Common myeloid progenitor, CD34-positive (primary cell): ENCODE measurements at regions of chr2 and their contacts with region 1.

Region 1: GRCh38 chr2:224369028-224369632 is 32.8 kb downstream of the FAM124B start:
- DNase-seq: peak; percentile 57 to 75 (median 67)
- H3K4me3 ChIP-seq: no peak overlapping the region
- H3K27ac ChIP-seq: no peak overlapping the region
- H3K4me1 ChIP-seq: no peaks in the 10 kb centered on the region
- H3K27me3 ChIP-seq: no peaks in the 10 kb centered on the region

Region 2: GRCh38 chr2:224293976-224294375 is 75.2 kb before region 1 on chr2:
- CTCF ChIA-PET with region 1: no interaction called
- POLR2A ChIA-PET with region 1: no interaction called
- DNase-seq: no peak
- H3K4me3 ChIP-seq: no peak overlapping the region
- H3K27ac ChIP-seq: no peak overlapping the region
- H3K4me1 ChIP-seq: no peaks in the 10 kb centered on the region
- H3K27me3 ChIP-seq: peaks cover 0 to 2% (median 0%) of the 10 kb centered on the region in 5 experiments

Region 3: DNA sequence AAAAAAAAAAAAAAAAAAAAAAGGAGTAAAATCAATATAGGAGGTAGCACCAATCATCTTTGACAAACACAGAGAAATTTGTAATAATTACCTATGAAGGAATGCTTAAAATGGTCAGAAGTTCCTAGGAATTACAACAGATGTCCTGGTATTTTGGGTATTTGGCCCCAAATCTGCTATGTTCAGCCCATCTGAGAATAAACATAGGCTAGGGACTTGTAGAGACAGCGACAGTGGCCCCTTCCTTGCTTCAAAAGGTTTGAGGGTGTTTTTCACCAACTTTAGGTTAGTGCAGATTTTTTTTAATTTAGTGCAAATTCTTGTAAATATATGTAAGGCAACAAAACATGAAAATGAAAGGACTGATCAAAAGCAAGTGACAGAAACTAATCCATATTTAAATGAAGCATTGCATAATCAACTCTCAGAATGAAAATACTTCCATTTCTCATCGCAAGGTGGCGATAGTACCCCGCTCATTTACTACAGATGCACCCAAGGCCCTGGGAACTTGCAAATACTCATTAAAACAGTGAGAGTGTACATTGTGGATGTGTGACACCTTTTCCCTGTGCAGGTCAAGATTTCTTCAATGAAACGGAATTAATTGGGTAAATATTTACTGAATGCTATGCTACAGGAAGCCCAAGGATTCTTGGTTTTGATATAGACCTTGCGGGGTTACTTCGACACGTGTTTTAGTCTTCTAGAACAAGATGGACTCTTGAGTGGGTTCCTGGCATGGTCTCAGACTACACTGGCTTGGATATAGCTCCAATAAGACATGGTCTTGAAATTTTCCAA is 11.8 kb before region 1 on chr2:
- CTCF ChIA-PET with region 1: interaction called, 32 read pairs
- POLR2A ChIA-PET with region 1: no interaction called
- DNase-seq: peak; percentile 77 to 90 (median 82)
- H3K4me3 ChIP-seq: no peak overlapping the region
- H3K27ac ChIP-seq: no peak overlapping the region
- H3K4me1 ChIP-seq: no peaks in the 10 kb centered on the region
- H3K27me3 ChIP-seq: peaks cover 0 to 2% (median 0%) of the 10 kb centered on the region in 5 experiments

Region 4: GRCh38 chr2:224401641-224402342 is 32.7 kb after region 1 on chr2 and contains the start of gene FAM124B:
- CTCF ChIA-PET with region 1: interaction called, 51 read pairs
- POLR2A ChIA-PET with region 1: no interaction called
- DNase-seq: peak; percentile 94 to 99 (median 98)
- H3K4me3 ChIP-seq: peak within 1 kb of the TSS; percentile 59 to 97 (median 88)
- H3K27ac ChIP-seq: peak within 1 kb of the TSS; percentile 92 to 96
- H3K4me1 ChIP-seq: peaks cover 30 to 76% (median 47%) of the 10 kb centered on the region in 4 experiments
- H3K27me3 ChIP-seq: no peaks in the 10 kb centered on the region

Region 5: GRCh38 chr2:224442071-224442967 is 73.2 kb after region 1 on chr2:
- CTCF ChIA-PET with region 1: interaction called, 12 read pairs
- POLR2A ChIA-PET with region 1: no interaction called
- DNase-seq: peak; percentile 36 to 71 (median 62)
- H3K4me3 ChIP-seq: peak overlapping the region; percentile 42 to 82 (median 69)
- H3K27ac ChIP-seq: no peak overlapping the region
- H3K4me1 ChIP-seq: peaks cover 0 to 10% (median 7%) of the 10 kb centered on the region in 4 experiments
- H3K27me3 ChIP-seq: no peaks in the 10 kb centered on the region